Mammary epithelial cell (primary cell): ENCODE measurements at regions of chr20 and their contacts with region 1.

Region 1: DNA sequence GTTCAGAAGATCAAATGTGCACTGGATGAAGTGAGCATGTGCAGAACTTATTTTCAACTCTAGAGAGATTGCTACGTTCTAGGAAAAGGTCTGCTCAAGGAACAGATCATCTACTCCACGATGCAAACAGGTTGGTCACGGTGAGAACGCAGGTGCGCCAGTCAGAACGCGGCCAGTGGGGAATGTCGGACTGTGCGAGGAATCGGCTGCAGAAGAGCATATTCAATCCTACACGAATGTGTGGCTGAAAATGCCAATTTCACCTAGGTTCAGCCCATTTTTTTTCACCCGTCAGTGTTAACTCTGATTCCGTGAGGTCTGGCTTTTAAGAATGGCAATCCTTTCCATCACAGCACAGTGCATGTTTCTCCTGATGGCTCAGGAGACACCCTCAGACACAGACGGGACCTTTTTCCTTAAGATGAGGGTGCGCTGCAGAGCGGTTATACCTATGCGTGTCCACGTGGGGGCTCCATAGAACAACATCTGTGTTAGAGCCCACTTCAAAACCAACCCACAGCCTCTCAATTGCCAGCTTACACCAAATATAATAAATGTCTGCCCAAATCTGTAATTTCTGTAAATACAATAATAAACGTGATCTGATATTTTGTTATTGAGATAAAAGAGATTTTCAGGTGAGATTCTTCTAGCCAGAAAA is 250.4 kb downstream of the FOXA2 start:
- DNase-seq: peak; percentile 40
- H3K4me3 ChIP-seq: no peak overlapping the region
- H3K27ac ChIP-seq: no peak overlapping the region
- H3K4me1 ChIP-seq: no peaks in the 10 kb centered on the region
- H3K27me3 ChIP-seq: no peaks in the 10 kb centered on the region
- CTCF ChIP-seq: peak; percentile 80 to 89

Region 2: GRCh38 chr20:22684072-22684762 is 350.2 kb after region 1 on chr20:
- CTCF ChIA-PET with region 1: interaction called, 12 read pairs
- dilution Hi-C with region 1: no loop called
- in situ Hi-C with region 1: loop called (anchors 5 kb)
- intact Hi-C with region 1: loop called (anchors 1 kb)
- DNase-seq: peak; percentile 54
- H3K4me3 ChIP-seq: no peak overlapping the region
- H3K27ac ChIP-seq: no peak overlapping the region
- H3K4me1 ChIP-seq: no peaks in the 10 kb centered on the region
- H3K27me3 ChIP-seq: no peaks in the 10 kb centered on the region
- CTCF ChIP-seq: peak; percentile 79 to 91

Region 3: GRCh38 chr20:23245553-23246181 is 911.7 kb after region 1 on chr20:
- CTCF ChIA-PET with region 1: no interaction called
- dilution Hi-C with region 1: no loop called
- in situ Hi-C with region 1: loop called in 1 of 2 experiments (anchors 25 kb)
- intact Hi-C with region 1: no loop called
- DNase-seq: peak; percentile 13
- H3K4me3 ChIP-seq: no peak overlapping the region
- H3K27ac ChIP-seq: no peak overlapping the region
- H3K4me1 ChIP-seq: no peaks in the 10 kb centered on the region
- H3K27me3 ChIP-seq: no peaks in the 10 kb centered on the region
- CTCF ChIP-seq: peak; percentile 12 to 40

Region 4: DNA sequence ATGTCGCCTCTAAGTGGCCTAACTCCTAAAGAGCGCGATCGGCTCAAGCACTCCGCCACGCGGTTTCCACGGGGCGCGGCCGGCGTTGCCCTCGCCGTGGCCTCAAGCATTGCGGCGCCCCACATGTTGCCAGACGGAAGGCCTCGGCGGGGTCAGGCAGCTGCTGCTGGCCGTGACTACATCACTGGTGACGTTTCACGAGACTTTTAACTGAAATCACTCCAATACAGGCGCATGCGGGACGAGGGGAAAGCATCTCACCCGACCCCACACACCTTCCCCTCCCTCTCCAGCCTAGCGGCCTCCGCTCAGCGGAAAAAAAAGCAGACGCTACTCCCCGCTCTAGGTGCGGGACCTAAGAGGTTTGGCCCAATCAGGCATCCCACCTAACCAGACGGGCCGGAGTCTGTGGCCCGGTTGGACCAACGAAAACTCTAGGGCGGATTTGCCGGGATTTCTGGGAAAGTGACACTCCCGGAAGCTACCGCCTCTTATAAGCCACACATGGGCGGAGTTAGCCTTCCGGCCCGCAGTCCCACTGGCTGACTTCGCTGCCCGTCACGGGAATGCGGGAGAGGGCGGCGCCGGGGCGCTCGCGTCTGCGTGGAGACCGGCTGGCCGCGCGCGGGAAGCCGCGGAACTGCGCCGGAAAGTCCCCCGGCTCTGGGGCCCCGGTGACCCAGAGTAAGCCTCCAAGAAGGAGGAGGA is 1016.3 kb after region 1 on chr20 and contains the start of gene NXT1:
- CTCF ChIA-PET with region 1: no interaction called
- dilution Hi-C with region 1: no loop called
- in situ Hi-C with region 1: loop called (anchors 25 kb)
- intact Hi-C with region 1: no loop called
- DNase-seq: peak; percentile 99
- H3K4me3 ChIP-seq: peak within 1 kb of the TSS; percentile 74 to 89 (median 78)
- H3K27ac ChIP-seq: peak within 1 kb of the TSS; percentile 81
- H3K4me1 ChIP-seq: peaks cover 13% of the 10 kb centered on the region
- H3K27me3 ChIP-seq: no peaks in the 10 kb centered on the region
- CTCF ChIP-seq: peak in 1 of 2 donors; percentile 0
- total RNA-seq, gene NXT1: 22.0 to 28.5 TPM